MCF 10A (cell line): ENCODE measurements at regions of chr10 and their contacts with region 1.

Region 1: GRCh38 chr10:4767033-4767814 is 58.8 kb upstream of the AKR1E2 start:
- DNase-seq: peak; percentile 57
- H3K4me3 Mint-ChIP-seq: no peak overlapping the region
- H3K27ac Mint-ChIP-seq: peak overlapping the region; percentile 76
- H3K4me1 Mint-ChIP-seq: peaks cover 31% of the 10 kb centered on the region
- H3K27me3 Mint-ChIP-seq: no peaks in the 10 kb centered on the region
- CTCF ChIP-seq: peak; percentile 78

Region 2: DNA sequence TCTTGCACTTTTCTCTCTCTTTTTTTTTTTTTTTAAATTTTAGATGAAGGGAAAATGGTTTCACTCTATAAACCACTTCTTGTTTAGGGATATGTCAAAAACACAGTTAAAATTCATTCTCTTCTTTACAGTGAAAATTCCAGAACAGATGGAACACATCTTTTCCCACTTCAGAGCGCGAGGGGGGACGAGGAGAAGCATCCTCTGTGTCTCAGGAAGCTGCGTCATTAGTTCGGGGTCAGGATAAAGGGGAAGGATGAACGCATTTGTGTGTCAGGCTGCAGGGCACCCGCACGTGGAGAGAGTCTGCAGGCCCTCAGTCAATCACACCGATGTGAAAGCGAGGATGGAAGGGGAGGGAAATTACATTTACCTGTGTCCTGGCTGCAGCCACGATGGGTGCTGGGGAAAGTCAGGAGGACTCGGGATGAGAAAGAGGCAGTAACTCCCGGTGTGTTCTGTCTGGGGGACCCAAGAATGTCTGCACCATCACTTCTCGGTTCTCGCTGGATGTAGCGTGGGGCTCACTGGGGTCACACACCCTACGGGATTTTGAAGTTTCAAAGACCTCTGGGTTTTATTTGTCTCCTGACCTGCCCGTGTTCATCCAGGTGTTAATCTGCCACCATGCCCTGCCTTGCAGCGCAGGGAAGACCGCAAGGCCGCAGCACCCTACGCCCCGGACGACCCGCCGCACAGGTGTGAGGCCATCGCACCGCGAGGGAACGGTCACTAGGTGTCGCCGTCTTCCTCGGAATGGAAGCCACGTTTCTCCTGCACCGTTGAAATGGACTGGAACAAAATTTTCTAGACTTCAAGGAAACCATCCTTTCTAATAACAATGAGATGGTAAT is 1527.9 kb before region 1 on chr10:
- CTCF ChIA-PET with region 1: interaction called, 8 read pairs
- POLR2A ChIA-PET with region 1: no interaction called
- intact Hi-C with region 1: loop called (anchors 1 kb)
- DNase-seq: peak; percentile 67
- H3K4me3 Mint-ChIP-seq: no peak overlapping the region
- H3K27ac Mint-ChIP-seq: peak overlapping the region; percentile 37
- H3K4me1 Mint-ChIP-seq: peaks cover 5% of the 10 kb centered on the region
- H3K27me3 Mint-ChIP-seq: no peaks in the 10 kb centered on the region
- CTCF ChIP-seq: peak; percentile 89

Region 3: GRCh38 chr10:4656576-4657182 is 110.5 kb before region 1 on chr10:
- CTCF ChIA-PET with region 1: interaction called, 13 read pairs
- POLR2A ChIA-PET with region 1: interaction called, 26 read pairs
- intact Hi-C with region 1: loop called (anchors 1 kb)
- DNase-seq: peak; percentile 76
- H3K4me3 Mint-ChIP-seq: no peak overlapping the region
- H3K27ac Mint-ChIP-seq: peak overlapping the region; percentile 35
- H3K4me1 Mint-ChIP-seq: peaks cover 12% of the 10 kb centered on the region
- H3K27me3 Mint-ChIP-seq: no peaks in the 10 kb centered on the region
- CTCF ChIP-seq: peak; percentile 90

Region 4: GRCh38 chr10:4671451-4672145 is 95.6 kb before region 1 on chr10:
- CTCF ChIA-PET with region 1: interaction called, 15 read pairs
- POLR2A ChIA-PET with region 1: interaction called, 28 read pairs
- intact Hi-C with region 1: no loop called
- DNase-seq: peak; percentile 72
- H3K4me3 Mint-ChIP-seq: peak overlapping the region; percentile 56
- H3K27ac Mint-ChIP-seq: peak overlapping the region; percentile 90
- H3K4me1 Mint-ChIP-seq: peaks cover 27% of the 10 kb centered on the region
- H3K27me3 Mint-ChIP-seq: no peaks in the 10 kb centered on the region
- CTCF ChIP-seq: no peak